ENCODE measurements at regions of chr12 and their contacts with region 1.

Region 1: DNA sequence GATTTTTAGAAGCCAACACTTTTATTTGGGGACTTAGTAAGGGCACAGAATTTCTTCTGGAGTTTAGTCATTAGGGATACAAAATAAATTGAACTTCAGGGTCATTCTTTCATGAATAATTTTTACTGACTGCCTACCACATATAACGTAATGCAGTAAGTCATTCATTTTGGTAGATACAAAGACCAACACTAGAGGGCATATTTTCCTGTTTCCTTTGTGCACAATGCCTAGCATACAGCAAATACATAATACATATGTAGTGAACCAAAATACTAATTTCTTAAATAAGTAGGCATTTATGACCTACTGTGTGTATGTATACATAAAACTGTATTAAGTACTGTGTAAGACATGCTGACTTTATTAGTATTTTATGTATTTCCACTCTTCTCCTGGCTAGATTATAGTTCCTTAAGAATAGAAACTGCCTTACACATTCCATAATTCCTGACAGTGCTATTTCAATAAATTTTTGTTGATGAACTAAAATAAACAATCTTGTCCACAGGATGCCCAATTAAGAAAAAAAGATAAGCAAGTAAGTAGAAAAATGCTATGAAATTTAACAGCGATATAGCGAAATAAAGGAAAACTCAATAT is 47.9 kb downstream of the PPP1R12A start:
- DNase-seq: peak in 1 of 2 experiments; percentile 44
- H3K4me3 ChIP-seq: no peak overlapping the region
- H3K4me3 Mint-ChIP-seq: no peak overlapping the region
- H3K27ac Mint-ChIP-seq: no peak overlapping the region
- H3K4me1 ChIP-seq: no peaks in the 10 kb centered on the region
- H3K4me1 Mint-ChIP-seq: peaks cover 8% of the 10 kb centered on the region
- H3K27me3 ChIP-seq: no peaks in the 10 kb centered on the region
- H3K27me3 Mint-ChIP-seq: no peaks in the 10 kb centered on the region
- CTCF ChIP-seq: peak; percentile 46 to 63

Region 2: GRCh38 chr12:79935021-79935623 is 48.1 kb after region 1 on chr12 and contains the start of gene PPP1R12A:
- CTCF ChIA-PET with region 1: no interaction called
- POLR2A ChIA-PET with region 1: no interaction called
- intact Hi-C with region 1: loop called (anchors 2 kb)
- DNase-seq: peak; percentile 97
- H3K4me3 ChIP-seq: peak within 1 kb of the TSS; percentile 100
- H3K4me3 Mint-ChIP-seq: peak within 1 kb of the TSS; percentile 83
- H3K27ac Mint-ChIP-seq: peak within 1 kb of the TSS; percentile 71
- H3K4me1 ChIP-seq: peaks cover 10% of the 10 kb centered on the region; the same call in 1 of the 2 replicates
- H3K4me1 Mint-ChIP-seq: peaks cover 5% of the 10 kb centered on the region
- H3K27me3 ChIP-seq: no peaks in the 10 kb centered on the region
- H3K27me3 Mint-ChIP-seq: no peaks in the 10 kb centered on the region
- CTCF ChIP-seq: no peak
- total RNA-seq, gene PPP1R12A: 60.7 and 62.5 TPM in 2 replicates

Region 3: DNA sequence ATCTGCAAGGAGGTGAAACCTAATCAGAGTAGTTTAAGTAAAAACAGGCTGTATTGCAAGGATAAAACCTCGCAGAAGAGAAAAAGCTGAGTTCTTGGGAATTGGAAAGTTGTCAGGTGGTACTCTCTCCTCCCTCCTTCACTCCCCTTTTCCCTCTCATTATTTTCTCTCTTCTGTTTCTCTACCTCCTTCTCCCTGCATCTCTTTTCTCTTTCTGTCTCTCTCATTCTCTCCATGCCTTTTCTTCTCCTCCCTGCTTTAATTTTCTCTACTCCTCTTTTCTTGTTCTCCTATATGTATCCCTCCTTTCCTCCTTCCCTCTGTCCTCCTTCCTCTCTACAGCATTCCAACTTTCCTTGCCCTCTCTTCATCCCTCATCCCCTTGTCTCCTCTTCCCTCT is 62.1 kb after region 1 on chr12:
- CTCF ChIA-PET with region 1: no interaction called
- POLR2A ChIA-PET with region 1: interaction called, 12 read pairs
- intact Hi-C with region 1: no loop called
- DNase-seq: no peak
- H3K4me3 ChIP-seq: no peak overlapping the region
- H3K4me3 Mint-ChIP-seq: no peak overlapping the region
- H3K27ac Mint-ChIP-seq: no peak overlapping the region
- H3K4me1 ChIP-seq: no peaks in the 10 kb centered on the region
- H3K4me1 Mint-ChIP-seq: peaks cover 12% of the 10 kb centered on the region
- H3K27me3 ChIP-seq: no peaks in the 10 kb centered on the region
- H3K27me3 Mint-ChIP-seq: peaks cover 4% of the 10 kb centered on the region
- CTCF ChIP-seq: no peak

Region 4: GRCh38 chr12:79997096-79997791 is 110.2 kb after region 1 on chr12:
- CTCF ChIA-PET with region 1: no interaction called
- POLR2A ChIA-PET with region 1: no interaction called
- intact Hi-C with region 1: loop called (anchors 5 kb)
- DNase-seq: no peak
- H3K4me3 ChIP-seq: no peak overlapping the region
- H3K4me3 Mint-ChIP-seq: no peak overlapping the region
- H3K27ac Mint-ChIP-seq: no peak overlapping the region
- H3K4me1 ChIP-seq: peaks cover 17% of the 10 kb centered on the region
- H3K4me1 Mint-ChIP-seq: peaks cover 7% of the 10 kb centered on the region
- H3K27me3 ChIP-seq: no peaks in the 10 kb centered on the region
- H3K27me3 Mint-ChIP-seq: no peaks in the 10 kb centered on the region
- CTCF ChIP-seq: no peak

Region 5: DNA sequence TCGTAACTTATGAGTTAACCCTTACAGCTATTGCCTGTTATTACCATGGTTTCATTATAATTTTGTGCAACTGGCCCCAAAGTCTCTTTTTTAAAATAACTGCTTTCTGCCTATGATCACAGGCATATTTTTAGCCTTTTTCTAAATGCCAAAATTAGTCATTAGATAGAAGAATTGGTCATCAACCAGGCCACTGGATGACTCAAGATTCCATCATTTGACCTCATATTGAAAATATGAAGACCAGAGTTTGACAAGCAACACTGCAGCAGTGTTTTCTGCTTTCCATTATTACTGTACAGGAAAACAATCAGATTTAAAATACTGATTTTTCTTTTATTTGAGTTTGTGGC is 157.7 kb after region 1 on chr12:
- CTCF ChIA-PET with region 1: no interaction called
- POLR2A ChIA-PET with region 1: no interaction called
- intact Hi-C with region 1: no loop called
- DNase-seq: no peak
- H3K4me3 ChIP-seq: no peak overlapping the region
- H3K4me3 Mint-ChIP-seq: no peak overlapping the region
- H3K27ac Mint-ChIP-seq: no peak overlapping the region
- H3K4me1 ChIP-seq: no peaks in the 10 kb centered on the region
- H3K4me1 Mint-ChIP-seq: no peaks in the 10 kb centered on the region
- H3K27me3 ChIP-seq: no peaks in the 10 kb centered on the region
- H3K27me3 Mint-ChIP-seq: peaks cover 3% of the 10 kb centered on the region
- CTCF ChIP-seq: no peak